Dorsolateral prefrontal cortex (tissue), 120 donors: ENCODE measurements at regions of chr3 and their contacts with region 1.

Region 1: GRCh38 chr3:46200211-46200610 is 7.9 kb downstream of the CCR1 start:
- DNase-seq: no peak
- H3K4me3 ChIP-seq: peak overlapping the region in 1 of 59 donors; percentile 17
- H3K27ac ChIP-seq: no peak overlapping the region
- H3K27me3 ChIP-seq: no peaks in the 10 kb centered on the region
- CTCF ChIP-seq: no peak

Region 2: GRCh38 chr3:46089237-46090011 is 110.8 kb before region 1 on chr3:
- intact Hi-C with region 1: loop called in 1 of 2 experiments (anchors 5 kb)
- DNase-seq: peak in 7 of 10 donors; percentile 32 to 60 (median 55)
- H3K4me3 ChIP-seq: no peak overlapping the region
- H3K27ac ChIP-seq: peak overlapping the region in 9 of 59 donors; percentile 9 to 69 (median 29)
- H3K27me3 ChIP-seq: no peaks in the 10 kb centered on the region
- CTCF ChIP-seq: no peak

Region 3: GRCh38 chr3:46395210-46395731 is 195.1 kb after region 1 on chr3:
- intact Hi-C with region 1: no loop called
- DNase-seq: no peak
- H3K4me3 ChIP-seq: no peak overlapping the region
- H3K27ac ChIP-seq: no peak overlapping the region
- H3K27me3 ChIP-seq: no peaks in the 10 kb centered on the region
- CTCF ChIP-seq: no peak